Activated CD4-positive, alpha-beta memory T cell treated with anti-CD3 and anti-CD28 coated beads for 36 hours (primary cell): ENCODE measurements at regions of chr5 and their contacts with region 1.

Region 1: DNA sequence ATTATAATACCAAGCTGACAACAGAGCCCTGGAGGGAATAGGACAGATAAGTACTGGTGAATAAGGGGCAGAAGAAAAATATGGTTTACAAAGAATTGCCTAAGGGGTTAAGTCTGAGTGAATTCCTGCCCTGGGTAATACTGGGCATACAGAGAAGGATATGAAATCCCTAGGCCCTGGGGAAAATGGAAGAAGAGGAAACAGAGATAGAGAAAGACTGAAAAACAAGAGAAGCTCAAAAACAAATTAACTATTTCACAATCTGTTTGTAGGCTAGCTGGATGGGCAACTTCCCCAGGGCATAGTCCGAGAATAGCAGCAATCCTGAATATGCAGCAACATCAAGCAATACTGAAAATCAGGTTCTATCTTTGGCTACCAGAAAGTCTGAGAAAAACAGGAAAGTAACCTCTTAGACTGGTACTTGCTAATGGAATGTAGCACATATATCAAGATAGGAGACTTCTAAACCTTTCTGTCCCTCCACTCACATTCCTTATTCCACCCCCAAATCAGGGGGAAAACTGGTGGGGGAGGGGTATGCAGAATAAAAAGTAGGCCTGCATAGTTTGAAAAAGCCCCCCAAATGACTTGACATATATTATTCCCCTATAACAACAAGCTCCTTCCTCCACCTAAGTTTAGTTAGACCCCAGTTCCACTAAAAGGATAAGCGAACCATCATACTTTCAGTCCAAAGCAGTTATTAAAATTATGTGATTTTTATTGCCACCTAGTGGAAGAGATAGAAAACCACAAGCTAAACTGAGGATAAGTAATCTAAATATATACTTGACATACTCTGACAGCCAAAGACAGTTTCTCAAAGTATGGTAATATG is 20.6 kb downstream of the SLC38A9 start:
- DNase-seq: no peak
- H3K4me3 Mint-ChIP-seq: no peak overlapping the region
- H3K27ac Mint-ChIP-seq: no peak overlapping the region
- H3K4me1 Mint-ChIP-seq: peaks cover 2% of the 10 kb centered on the region
- H3K27me3 Mint-ChIP-seq: no peaks in the 10 kb centered on the region

Region 2: GRCh38 chr5:55226027-55226933 is 465.2 kb before region 1 on chr5:
- CTCF ChIA-PET with region 1: interaction called, 3 read pairs
- POLR2A ChIA-PET with region 1: no interaction called
- intact Hi-C with region 1: loop called (anchors 5 kb)
- DNase-seq: peak; percentile 82
- H3K4me3 Mint-ChIP-seq: peak overlapping the region; percentile 30
- H3K27ac Mint-ChIP-seq: no peak overlapping the region
- H3K4me1 Mint-ChIP-seq: peaks cover 30% of the 10 kb centered on the region
- H3K27me3 Mint-ChIP-seq: peaks cover 84% of the 10 kb centered on the region

Region 3: DNA sequence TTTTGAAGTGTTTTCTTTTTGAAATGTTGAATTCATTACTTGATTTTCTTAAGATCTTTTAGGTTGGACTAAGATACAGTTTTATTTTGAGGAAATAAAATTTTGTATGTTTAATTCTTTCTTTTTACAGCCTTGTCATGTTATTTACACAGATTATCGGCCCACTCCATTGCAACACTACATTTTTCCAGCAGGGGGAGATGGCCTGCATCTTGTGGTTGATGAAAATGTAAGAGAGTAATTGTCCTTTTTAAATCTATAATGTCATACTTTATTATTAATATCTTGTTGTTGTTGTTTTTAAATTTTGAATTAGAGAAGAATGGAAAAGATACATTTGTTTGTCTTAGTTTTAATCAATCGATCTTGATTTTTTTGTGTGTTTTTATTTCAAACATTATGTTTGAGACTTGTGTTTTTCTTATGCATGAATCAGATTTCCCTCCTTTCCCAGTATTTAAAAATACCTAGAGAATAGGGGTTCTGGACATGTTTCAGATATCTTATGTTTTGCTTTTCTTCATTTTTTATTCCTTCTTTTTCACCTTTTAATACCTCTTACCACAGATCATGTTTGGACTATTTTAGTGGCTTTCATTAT is 347.0 kb before region 1 on chr5:
- CTCF ChIA-PET with region 1: interaction called, 16 read pairs
- POLR2A ChIA-PET with region 1: no interaction called
- intact Hi-C with region 1: loop called (anchors 5 kb)
- DNase-seq: peak; percentile 69
- H3K4me3 Mint-ChIP-seq: no peak overlapping the region
- H3K27ac Mint-ChIP-seq: no peak overlapping the region
- H3K4me1 Mint-ChIP-seq: peaks cover 2% of the 10 kb centered on the region
- H3K27me3 Mint-ChIP-seq: no peaks in the 10 kb centered on the region

Region 4: GRCh38 chr5:55421074-55421529 is 270.4 kb before region 1 on chr5:
- CTCF ChIA-PET with region 1: interaction called, 5 read pairs
- POLR2A ChIA-PET with region 1: no interaction called
- intact Hi-C with region 1: loop called (anchors 5 kb)
- DNase-seq: peak; percentile 37
- H3K4me3 Mint-ChIP-seq: no peak overlapping the region
- H3K27ac Mint-ChIP-seq: peak overlapping the region; percentile 15
- H3K4me1 Mint-ChIP-seq: peaks cover 34% of the 10 kb centered on the region
- H3K27me3 Mint-ChIP-seq: no peaks in the 10 kb centered on the region

Region 5: DNA sequence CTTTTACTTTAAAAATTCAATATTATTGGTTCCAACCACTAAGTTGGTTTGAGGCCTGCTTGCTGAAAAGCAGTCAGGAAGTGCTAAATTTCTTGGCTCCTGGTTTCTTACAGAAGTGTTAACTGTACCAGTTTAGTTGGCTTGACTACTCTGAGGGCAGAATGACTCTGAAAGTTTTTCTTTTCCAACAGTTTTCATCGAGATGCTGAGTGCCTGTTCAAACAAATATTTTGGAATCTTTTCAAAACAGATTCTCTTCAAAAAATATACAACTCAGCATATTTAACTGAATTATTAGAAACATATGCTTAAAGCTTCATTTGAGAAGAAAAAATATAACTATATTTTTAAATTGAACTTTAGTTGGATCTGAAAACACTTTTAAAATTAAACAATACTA is 16.4 kb before region 1 on chr5:
- CTCF ChIA-PET with region 1: interaction called, 12 read pairs
- POLR2A ChIA-PET with region 1: no interaction called
- intact Hi-C with region 1: no loop called
- DNase-seq: no peak
- H3K4me3 Mint-ChIP-seq: no peak overlapping the region
- H3K27ac Mint-ChIP-seq: no peak overlapping the region
- H3K4me1 Mint-ChIP-seq: peaks cover 3% of the 10 kb centered on the region
- H3K27me3 Mint-ChIP-seq: no peaks in the 10 kb centered on the region